Adrenal gland (tissue), 19 donors: ENCODE measurements at regions of chr3 and their contacts with region 1.

Region 1: DNA sequence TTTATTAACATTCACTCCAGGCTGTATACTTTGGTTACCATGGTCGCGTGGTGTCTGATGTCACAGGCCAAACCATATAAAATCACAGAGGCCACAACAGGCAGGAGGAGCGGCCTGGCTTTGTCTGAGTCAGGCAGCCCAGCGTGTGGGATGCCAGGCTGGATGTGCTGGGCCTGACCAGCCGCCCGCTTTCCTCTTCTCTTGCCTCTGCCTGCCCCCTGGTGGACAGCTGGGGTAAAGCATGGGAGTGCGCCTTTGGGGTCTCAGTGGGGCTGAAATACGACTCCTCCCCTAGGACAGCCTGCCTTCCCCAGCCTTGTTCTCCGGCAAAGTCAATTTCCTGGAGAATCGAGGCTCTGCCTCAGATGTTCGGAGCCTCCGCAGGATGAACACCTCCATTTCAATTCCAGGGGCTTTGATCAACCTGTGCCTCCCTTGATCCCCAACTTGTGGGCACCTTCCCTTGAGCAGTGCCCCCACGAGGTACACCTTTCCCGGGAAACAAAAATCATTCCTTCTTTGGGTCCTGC is 78.2 kb downstream of the CCNL1 start:
- DNase-seq: peak; percentile 89 to 96 (median 93)
- H3K4me3 ChIP-seq: no peak overlapping the region
- H3K27ac ChIP-seq: no peak overlapping the region
- H3K4me1 ChIP-seq: peaks cover 0 to 4% of the 10 kb centered on the region in 2 donors
- H3K27me3 ChIP-seq: no peaks in the 10 kb centered on the region
- CTCF ChIP-seq: peak; percentile 92 to 99 (median 97)
- POLR2A ChIP-seq: peak; percentile 25 to 38

Region 2: DNA sequence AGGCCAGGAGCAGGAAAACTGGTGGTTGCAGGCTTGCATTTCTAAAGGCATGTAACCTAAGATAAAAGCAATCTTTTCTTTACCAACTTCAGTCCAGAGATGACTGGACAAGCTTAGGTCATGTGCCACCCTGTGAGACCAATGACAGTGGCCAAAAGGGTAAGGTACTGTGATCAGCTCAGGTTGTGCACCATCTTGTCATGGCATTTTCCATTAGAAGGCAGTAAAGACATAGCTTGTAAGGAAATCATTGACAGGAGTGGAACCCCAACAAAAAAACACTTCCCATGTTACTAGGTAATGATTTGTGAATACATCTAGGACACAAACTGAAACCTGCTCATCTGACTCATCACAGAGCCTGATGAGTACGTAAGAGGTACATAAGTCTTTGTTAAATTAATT is 562.0 kb before region 1 on chr3:
- intact Hi-C with region 1: loop called in 1 of 2 experiments (anchors 10 kb)
- DNase-seq: no peak
- H3K4me3 ChIP-seq: no peak overlapping the region
- H3K27ac ChIP-seq: no peak overlapping the region
- H3K4me1 ChIP-seq: peaks cover 9 to 13% of the 10 kb centered on the region in 2 donors
- H3K27me3 ChIP-seq: no peaks in the 10 kb centered on the region
- CTCF ChIP-seq: no peak
- POLR2A ChIP-seq: no peak

Region 3: GRCh38 chr3:156554842-156555687 is 526.7 kb before region 1 on chr3 and contains the start of gene SSR3:
- intact Hi-C with region 1: loop called in 1 of 2 experiments (anchors 10 kb)
- DNase-seq: peak; percentile 99 to 100 (median 100)
- H3K4me3 ChIP-seq: peak within 1 kb of the TSS; percentile 17 to 94 (median 72)
- H3K27ac ChIP-seq: peak within 1 kb of the TSS; percentile 74 to 89 (median 80)
- H3K4me1 ChIP-seq: peaks cover 5 to 37% of the 10 kb centered on the region in 2 donors
- H3K27me3 ChIP-seq: no peaks in the 10 kb centered on the region
- CTCF ChIP-seq: peak in 5 of 6 experiments; percentile 43 to 79 (median 74)
- POLR2A ChIP-seq: peak; percentile 94
- total RNA-seq, gene SSR3: 93.6 to 479 (median 128) TPM

Region 4: DNA sequence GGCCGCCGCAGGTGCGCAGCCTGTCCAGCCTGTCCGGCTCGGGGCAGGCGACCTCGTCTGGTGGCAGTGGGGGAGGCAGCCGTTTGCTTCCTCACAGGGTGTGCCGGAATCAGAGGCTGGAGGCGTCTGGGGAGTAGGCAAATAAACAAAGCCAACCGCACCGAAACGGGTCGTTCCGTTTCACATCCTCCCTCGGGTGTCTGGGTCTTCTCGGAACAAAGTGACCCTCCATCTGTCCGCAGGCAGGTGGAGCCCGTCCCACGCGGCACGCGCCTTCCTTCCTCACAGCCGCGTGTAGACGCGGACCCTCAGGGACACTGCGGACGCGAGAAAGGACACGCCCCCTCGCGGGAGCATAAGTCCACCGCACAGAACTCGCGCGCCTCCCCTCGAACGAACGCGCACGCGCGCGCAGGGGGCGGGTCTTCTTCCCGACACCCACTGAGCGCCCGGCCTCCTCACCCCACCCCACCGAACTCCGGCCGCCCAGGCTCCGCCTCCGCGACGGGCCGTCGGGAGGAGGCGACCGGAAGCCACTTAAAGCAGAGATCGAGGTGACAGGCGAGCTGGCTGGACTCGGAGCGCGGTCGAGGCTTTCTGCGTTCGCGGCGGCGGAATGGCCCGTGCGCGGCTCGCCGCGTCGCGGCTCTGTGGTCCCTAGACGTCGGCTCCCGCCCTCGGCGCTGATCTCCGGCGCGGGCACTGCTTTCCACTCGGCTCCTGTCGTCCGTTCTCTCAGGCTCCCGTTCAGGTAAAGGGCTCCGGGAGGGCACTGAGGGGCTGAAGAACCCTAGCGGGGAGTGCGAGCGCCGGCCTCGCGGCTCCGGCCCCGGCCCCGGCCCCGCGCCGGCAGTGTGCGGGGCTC is 407.5 kb before region 1 on chr3 and contains the start of gene TIPARP:
- intact Hi-C with region 1: loop called (anchors 5 to 10 kb)
- DNase-seq: peak; percentile 99 to 100 (median 99)
- H3K4me3 ChIP-seq: peak within 1 kb of the TSS; percentile 73 to 87 (median 84)
- H3K27ac ChIP-seq: peak within 1 kb of the TSS; percentile 93 to 99 (median 97)
- H3K4me1 ChIP-seq: peaks cover 0 to 22% of the 10 kb centered on the region in 2 donors
- H3K27me3 ChIP-seq: no peaks in the 10 kb centered on the region
- CTCF ChIP-seq: peak; percentile 45 to 85 (median 74)
- POLR2A ChIP-seq: peak; percentile 98 to 100
- total RNA-seq, gene TIPARP: 15.8 to 75.5 (median 19.8) TPM

Region 5: DNA sequence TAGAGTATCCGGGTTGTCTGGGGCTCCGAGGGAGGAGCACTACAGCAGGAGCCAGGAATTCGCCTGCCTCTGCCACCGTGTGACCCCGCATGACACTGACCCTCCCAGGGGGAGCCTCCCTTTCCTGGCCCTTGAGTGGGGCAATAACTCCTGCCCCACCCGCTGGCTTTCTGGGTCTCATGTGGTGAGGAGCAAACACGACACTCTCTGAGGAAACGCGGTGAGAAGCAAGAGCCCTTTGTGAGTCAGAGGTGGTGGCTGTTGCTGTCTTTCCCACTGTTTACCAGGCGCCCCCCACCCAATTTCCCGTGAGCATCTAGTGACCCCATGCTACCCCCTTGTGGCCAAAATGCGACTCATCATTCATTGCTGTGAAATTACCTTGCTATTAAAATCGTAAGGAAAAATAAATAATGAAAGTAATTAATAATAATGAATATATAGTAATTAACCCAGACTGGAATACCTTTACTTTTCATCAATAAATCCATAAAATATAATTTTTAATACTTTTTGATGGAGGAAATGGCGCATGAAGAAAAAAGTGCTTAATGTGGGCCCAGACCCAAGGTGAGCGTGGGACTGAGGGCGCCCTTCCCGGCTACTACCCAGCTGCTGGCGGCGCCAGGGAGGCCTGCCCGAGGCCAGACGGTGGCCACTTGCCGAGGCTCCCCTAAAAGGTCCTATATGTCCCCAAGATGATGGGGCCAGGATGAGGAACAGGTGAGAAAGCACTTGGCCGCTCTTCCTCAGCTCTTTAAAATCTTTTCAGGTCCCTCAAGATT is 48.9 kb after region 1 on chr3:
- intact Hi-C with region 1: loop called in 1 of 2 experiments (anchors 5 kb)
- DNase-seq: peak in 2 of 7 donors; percentile 35 to 38
- H3K4me3 ChIP-seq: no peak overlapping the region
- H3K27ac ChIP-seq: peak overlapping the region in 2 of 5 donors; percentile 63 to 75
- H3K4me1 ChIP-seq: peaks cover 19 to 43% of the 10 kb centered on the region in 2 donors
- H3K27me3 ChIP-seq: no peaks in the 10 kb centered on the region
- CTCF ChIP-seq: peak; percentile 18 to 60 (median 53)
- POLR2A ChIP-seq: no peak